ENCODE measurements at regions of chr1 and their contacts with region 1.

Region 1: DNA sequence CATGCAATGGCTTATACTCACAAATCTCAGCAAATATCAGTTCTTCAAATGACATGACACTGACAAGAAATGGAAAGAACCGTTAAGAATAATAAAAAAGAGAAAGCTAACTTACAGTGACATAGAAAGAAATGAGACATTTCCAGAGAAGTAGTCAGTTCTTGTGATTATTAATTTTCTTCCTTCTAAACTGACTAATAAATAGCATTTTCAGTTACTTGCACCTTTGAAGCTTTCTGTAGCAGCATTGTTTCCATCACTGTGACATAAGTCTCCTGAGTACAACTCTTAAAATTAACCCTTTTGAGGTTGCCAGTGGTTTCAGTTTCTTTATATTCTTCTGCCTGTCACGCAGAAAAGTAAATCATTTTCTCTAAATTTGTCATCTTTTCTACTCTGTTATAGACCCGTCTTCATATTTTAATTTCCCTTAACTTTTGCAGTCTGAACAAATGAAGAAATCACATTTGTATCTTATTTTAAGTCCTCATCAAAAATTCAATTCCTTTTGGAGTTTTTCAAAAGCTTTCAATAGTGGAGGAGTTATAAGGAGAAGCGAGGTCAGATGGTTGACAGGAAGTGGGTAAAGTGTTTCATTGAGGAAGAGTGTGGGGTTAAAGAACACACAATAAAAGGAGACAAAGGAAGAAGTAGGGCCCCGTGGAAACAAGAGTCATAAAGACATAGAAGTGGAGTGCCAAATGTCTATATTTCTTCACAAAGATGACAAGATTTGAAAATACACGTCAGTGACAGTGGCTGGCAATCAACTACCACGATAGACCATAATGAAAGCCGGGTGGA is 57.9 kb upstream of the S1PR1 start:
- DNase-seq: no peak
- ATAC-seq: no peak
- H3K4me3 ChIP-seq: no peak overlapping the region
- H3K27ac ChIP-seq: peak overlapping the region in 1 of 10 donors; percentile 59
- H3K4me1 ChIP-seq: peaks cover 0 to 42% (median 14%) of the 10 kb centered on the region in 9 donors
- H3K27me3 ChIP-seq: no peaks in the 10 kb centered on the region
- CTCF ChIP-seq: no peak

Region 2: DNA sequence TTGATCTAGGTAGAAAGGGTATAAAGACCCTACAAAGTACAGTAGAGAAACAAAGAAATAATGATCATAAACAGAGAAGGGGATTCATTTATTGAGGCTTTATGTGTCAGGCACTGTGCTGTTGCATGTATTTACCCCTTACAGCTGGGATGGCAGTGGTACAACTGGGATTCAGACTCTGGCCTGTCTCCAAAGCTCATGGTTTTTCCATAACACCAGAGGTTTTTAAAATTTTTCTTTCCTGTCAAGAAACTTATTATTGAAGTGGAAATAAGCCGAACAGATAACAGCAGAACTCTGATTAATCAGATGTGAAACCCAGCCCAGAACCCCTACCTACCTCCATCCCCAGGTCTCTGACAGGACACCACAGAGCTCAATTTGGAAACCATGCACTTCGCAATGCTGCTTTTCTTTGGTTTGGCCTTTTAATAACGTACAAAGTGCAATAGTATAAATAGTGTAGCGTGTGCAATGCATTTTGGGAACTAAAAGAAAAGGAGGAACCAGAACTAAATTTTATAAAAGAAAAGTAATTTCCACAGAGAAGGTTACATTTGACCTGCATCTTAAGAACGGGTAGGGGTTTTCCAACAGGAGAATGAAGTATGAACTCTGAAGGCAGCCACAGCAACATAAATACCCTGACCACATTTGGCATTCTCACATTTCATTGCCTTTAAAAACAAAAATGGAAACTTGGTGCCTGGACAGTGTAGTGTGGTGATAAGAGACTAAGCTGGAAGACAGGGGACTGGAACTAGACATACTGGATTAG is 34.0 kb before region 1 on chr1:
- intact Hi-C with region 1: loop called in 1 of 10 experiments (anchors 5 kb)
- DNase-seq: no peak
- ATAC-seq: no peak
- H3K4me3 ChIP-seq: no peak overlapping the region
- H3K27ac ChIP-seq: no peak overlapping the region
- H3K4me1 ChIP-seq: peaks cover 0 to 24% (median 11%) of the 10 kb centered on the region in 9 donors
- H3K27me3 ChIP-seq: no peaks in the 10 kb centered on the region
- CTCF ChIP-seq: no peak

Region 3: DNA sequence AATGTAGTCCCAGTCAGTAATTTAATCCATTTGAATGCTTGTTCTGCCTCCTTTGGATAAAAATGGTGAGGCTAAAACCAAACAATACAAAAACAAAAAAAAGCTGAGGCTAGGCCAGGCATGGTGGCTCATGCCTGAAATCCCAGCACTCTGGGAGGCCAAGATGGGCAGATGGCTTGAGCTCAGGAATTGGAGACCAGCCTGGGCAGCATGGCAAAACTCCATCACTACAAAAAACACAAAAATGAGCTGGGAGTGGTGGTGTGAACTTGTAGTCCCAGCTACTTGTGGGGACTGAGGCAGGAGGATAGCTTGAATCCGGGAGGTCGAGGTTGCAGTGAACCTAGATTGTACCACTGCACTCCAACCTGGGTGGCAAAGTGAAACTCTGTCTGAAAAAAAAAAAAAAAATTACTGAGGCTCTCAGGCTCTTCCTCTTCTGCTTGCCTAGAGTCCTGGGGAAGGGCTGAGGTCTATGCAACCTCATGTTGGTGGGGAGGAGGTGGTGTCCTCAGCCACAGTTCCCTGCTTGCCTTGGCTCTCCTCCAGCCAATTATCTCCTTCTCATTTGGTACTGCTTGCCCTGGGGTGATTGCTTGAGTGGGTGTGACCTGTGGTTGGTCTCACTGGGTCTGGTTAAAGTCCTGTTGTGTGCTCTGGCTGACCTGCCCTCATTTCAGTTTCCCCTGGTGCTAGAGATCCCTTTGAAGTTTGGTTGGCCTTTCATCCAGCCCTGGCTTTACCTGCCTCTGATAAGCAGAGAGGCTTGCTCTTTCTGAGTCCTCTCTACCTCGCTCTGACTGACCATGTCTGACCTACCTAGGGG is 78.8 kb after region 1 on chr1:
- intact Hi-C with region 1: no loop called
- DNase-seq: no peak
- ATAC-seq: peak; percentile 19 to 66 (median 43)
- H3K4me3 ChIP-seq: no peak overlapping the region
- H3K27ac ChIP-seq: peak overlapping the region in 1 of 10 donors; percentile 76
- H3K4me1 ChIP-seq: peaks cover 0 to 62% (median 14%) of the 10 kb centered on the region in 9 donors
- H3K27me3 ChIP-seq: no peaks in the 10 kb centered on the region
- CTCF ChIP-seq: no peak

Region 4: DNA sequence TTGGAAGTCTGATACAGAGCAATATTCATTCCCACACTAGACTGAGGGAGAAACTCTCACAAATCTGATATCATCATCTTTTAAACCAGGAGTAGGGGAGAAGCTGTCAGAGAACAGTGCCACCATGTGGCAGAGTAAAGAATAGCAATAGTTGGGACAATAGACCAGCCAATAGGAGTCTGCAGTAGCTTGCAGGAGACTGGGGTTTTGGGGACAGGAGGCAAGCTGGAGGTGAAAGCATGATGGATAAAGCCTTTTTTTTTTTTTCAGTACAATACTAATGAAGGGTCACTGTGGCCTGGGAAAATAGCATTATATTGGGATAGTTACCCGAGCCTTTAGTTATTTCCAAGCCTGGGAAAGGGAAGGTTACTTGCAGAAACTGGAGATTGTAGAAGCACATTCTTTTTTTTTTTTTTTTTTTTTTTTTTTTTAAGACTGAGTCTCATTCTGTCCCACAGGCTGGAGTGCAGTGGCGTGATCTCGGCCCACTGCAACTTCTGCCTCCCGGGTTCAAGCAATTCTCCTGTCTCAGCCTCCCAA is 178.6 kb after region 1 on chr1:
- intact Hi-C with region 1: no loop called
- DNase-seq: peak in 1 of 2 donors; percentile 77
- ATAC-seq: peak; percentile 78 to 90 (median 82)
- H3K4me3 ChIP-seq: no peak overlapping the region
- H3K27ac ChIP-seq: no peak overlapping the region
- H3K4me1 ChIP-seq: no peaks in the 10 kb centered on the region
- H3K27me3 ChIP-seq: peaks cover 0 to 26% (median 0%) of the 10 kb centered on the region in 7 donors
- CTCF ChIP-seq: peak; percentile 76 to 91 (median 85)